Body of pancreas (tissue), 4 donors: ENCODE measurements at regions of chr22 and their contacts with region 1.

Region 1: DNA sequence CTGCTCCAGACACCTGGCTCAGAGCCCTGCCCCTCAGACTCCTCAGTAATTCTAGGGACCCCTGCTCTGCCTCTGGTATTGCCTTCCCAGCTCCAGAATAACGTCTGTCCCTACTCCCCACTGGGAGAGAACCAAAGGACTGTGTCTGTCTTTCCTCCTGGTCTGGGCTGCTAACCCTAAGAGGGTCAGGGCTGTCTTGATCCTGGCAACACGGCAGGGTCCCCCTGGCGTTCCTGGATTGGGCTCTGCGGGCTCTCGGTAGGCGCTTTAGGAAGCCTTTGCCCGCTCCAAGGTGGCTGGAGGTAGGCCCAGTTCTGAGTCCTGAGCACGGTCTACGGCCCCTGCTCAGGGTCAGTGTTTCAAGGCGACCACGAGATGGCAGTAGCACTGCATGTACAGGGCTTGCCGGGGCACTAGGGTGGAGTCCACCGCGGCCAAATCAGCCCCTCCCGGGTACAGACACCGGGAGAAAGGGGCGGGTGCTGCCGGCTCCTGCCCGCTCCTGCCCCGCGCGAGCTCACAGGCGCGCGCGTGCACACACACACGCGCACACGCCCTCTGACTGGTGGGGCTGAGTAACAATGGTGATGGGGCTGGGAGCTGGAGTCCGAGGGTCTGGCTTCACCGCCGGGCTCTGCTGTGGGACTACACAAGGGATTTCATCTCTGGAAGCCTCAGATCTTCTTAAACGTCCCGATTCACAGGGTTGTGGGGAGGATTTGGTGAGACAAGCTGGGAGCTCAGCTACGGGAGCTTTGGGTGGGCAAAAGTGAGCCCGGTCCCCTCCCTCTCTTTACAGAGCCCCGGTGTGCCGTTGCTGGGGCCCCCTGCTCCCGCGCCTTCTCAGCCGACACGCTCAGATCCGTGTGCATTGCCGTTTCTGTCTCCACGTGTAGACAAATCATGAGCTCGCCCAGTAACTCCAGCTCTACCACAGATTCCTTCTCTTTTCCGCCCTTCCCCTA is 30.1 kb upstream of the HMOX1 start:
- DNase-seq: peak; percentile 92 to 94 (median 93)
- ATAC-seq: peak; percentile 95
- H3K4me3 ChIP-seq: peak overlapping the region in 1 of 2 donors; percentile 13
- H3K27ac ChIP-seq: peak overlapping the region in 3 of 4 donors; percentile 28 to 40 (median 30)
- H3K4me1 ChIP-seq: peaks cover 26% of the 10 kb centered on the region
- H3K27me3 ChIP-seq: no peaks in the 10 kb centered on the region
- CTCF ChIP-seq: peak; percentile 89 to 98 (median 96)
- POLR2A ChIP-seq: peak in 1 of 3 donors; percentile 29

Region 2: DNA sequence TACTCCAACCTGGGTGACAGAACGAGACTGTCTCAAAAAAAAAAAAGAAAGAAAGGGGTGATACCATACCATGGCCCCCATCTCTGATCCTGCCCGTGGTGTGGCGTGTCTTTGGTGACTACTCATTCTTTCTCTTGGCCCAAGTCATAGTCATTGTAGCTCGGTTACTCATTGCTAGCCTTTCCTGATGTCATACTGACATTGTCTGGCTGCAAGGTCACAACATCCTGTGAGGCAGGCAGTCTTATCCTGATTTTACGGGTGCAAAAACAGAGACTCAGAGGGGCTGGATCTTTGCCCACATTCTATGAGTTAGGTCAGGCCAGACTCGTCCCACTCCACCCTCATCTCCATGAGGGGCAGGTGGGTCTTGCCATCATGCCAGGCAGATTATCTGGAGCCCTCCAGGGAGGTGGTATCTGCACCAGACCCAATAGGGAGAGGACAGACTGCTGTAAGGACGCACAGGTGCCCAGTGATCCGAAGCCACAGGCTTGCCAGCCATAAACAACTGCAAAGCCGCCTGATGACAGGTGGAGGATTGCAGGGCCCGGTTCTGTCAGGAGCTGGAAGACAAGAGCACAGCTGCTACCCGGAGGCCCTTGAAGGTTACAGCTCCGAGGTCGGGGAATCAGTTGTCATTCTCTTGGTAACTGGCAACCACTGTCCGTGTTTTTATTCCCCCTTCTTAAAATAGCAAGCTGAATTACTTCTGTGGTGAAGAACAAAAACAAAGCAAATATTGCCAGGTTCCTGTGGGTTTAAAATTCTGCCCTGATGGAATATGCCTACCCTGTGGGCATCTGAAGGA is 37.3 kb before region 1 on chr22:
- intact Hi-C with region 1: no loop called
- DNase-seq: peak; percentile 38 to 64 (median 54)
- ATAC-seq: peak; percentile 77
- H3K4me3 ChIP-seq: no peak overlapping the region
- H3K27ac ChIP-seq: peak overlapping the region; percentile 54 to 78 (median 68)
- H3K4me1 ChIP-seq: peaks cover 51% of the 10 kb centered on the region
- H3K27me3 ChIP-seq: no peaks in the 10 kb centered on the region
- CTCF ChIP-seq: no peak
- POLR2A ChIP-seq: no peak

Region 3: GRCh38 chr22:35409783-35410662 is 59.2 kb after region 1 on chr22:
- intact Hi-C with region 1: no loop called
- DNase-seq: peak in 1 of 4 donors; percentile 64
- ATAC-seq: no peak
- H3K4me3 ChIP-seq: no peak overlapping the region
- H3K27ac ChIP-seq: peak overlapping the region in 1 of 4 donors; percentile 49
- H3K4me1 ChIP-seq: no peaks in the 10 kb centered on the region
- H3K27me3 ChIP-seq: no peaks in the 10 kb centered on the region
- CTCF ChIP-seq: no peak
- POLR2A ChIP-seq: no peak

Region 4: GRCh38 chr22:35582861-35583670 is 232.2 kb after region 1 on chr22:
- intact Hi-C with region 1: loop called (anchors 5 kb)
- DNase-seq: peak; percentile 61 to 71 (median 69)
- ATAC-seq: peak; percentile 79
- H3K4me3 ChIP-seq: no peak overlapping the region
- H3K27ac ChIP-seq: peak overlapping the region in 1 of 4 donors; percentile 33
- H3K4me1 ChIP-seq: peaks cover 4% of the 10 kb centered on the region
- H3K27me3 ChIP-seq: no peaks in the 10 kb centered on the region
- CTCF ChIP-seq: peak; percentile 79 to 92 (median 89)
- POLR2A ChIP-seq: no peak

Region 5: DNA sequence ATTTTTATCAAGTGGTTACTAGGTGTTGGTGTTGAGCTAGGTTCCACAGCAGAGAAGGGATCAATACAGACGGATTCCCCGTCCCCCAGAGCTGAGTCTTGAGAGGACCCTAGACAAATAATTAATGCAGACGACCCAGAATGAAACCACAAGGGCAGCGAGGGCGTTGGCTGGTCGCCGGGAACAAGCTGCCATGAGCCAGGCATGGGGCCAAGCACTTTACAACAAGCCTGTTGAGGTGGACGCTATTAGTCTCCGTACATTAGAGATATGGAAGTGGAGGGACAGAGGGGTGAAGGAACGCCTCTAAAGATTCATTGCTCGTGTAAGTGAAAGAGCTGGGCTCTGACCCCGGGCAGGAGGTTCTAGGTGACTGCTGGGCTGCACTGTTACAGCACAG is 1255.3 kb after region 1 on chr22:
- intact Hi-C with region 1: no loop called
- DNase-seq: peak; percentile 38 to 77 (median 52)
- ATAC-seq: no peak
- H3K4me3 ChIP-seq: no peak overlapping the region
- H3K27ac ChIP-seq: no peak overlapping the region
- H3K4me1 ChIP-seq: peaks cover 53% of the 10 kb centered on the region
- H3K27me3 ChIP-seq: no peaks in the 10 kb centered on the region
- CTCF ChIP-seq: no peak
- POLR2A ChIP-seq: no peak